Head of caudate nucleus (tissue), 42 donors: ENCODE measurements at regions of chr13 and their contacts with region 1.

Region 1: GRCh38 chr13:33542283-33543088 is 256.9 kb upstream of the STARD13 start:
- DNase-seq: peak; percentile 90 to 99 (median 97)

Region 2: DNA sequence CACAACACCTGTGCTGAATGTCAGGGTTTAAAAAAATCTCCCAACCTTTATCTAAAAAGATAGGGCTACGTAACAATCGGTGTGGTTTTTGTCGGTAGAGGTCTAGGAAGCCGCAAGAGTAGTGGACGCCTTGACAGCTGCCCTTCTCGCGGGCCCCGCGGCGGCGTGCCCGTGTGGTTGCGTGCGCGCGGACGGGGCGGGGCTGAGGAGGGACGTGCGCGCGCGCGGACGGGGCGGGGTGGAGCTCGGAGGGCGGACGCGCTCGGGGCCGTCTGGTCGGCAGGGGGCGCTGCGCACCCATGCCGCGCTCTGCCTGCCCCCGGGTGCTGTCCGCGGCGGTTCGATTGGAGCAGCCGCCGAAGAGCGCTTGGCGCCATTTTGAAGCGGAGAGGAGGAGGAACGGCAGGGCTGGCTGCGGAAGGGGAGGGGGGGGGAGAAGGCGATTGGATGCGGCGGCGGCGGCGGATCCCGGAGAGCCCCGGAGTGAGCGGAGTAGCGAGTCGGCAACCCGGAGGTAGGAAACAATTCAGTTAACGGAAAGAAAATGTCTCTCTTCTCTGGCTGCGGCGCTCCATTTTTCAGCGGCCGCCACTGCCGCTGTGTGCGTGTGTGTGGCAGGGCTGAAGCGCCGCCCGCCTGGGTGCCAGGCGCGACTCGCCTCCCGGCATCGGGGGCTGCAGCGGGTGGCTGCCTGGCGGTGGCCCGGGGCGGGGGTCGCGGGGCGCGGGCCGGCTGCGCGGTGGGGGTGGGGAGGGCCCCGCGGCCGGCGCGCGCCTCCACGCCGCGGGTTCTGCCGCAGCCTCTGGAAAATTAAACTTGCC is 956.2 kb before region 1 on chr13 and contains the start of gene PDS5B:
- intact Hi-C with region 1: loop called (anchors 5 kb)
- DNase-seq: peak; percentile 79 to 98 (median 95)

Region 3: DNA sequence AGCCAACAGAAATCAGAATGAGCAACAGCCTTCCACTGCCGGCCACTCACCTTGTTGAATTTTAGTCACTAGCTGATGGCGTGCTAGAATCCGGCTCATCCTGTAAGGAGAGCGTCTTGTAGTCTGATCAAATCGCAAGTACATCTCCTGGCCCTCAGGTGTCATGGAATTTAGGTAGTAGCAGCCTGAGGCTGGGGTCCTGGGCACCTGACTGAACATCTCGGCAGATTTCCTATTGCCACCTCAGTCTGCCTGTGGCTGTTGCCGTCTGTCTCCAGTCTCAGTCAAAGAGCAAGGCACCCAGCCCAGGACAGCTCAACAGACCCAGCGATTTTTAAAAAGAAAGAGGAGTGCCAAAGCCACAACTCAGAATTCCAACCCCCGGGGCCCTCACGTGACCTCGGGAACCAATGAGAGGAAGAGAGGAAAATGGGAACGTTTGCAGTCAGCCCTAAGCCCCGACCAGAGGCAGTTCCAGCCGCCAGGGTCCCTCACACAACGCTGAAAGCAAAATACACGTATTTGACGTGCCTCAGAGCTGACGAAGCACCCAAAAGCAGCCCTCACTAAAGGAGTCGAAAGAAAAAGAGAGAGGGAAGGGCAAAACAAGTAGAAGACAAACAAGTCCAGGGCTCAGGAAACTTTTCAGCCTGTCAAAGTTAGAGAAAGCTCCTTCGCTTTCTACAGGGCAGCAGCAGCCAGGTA is 256.9 kb before region 1 on chr13 and contains the start of gene STARD13:
- intact Hi-C with region 1: loop called (anchors 10 kb)
- DNase-seq: peak; percentile 80 to 99 (median 94)

Region 4: DNA sequence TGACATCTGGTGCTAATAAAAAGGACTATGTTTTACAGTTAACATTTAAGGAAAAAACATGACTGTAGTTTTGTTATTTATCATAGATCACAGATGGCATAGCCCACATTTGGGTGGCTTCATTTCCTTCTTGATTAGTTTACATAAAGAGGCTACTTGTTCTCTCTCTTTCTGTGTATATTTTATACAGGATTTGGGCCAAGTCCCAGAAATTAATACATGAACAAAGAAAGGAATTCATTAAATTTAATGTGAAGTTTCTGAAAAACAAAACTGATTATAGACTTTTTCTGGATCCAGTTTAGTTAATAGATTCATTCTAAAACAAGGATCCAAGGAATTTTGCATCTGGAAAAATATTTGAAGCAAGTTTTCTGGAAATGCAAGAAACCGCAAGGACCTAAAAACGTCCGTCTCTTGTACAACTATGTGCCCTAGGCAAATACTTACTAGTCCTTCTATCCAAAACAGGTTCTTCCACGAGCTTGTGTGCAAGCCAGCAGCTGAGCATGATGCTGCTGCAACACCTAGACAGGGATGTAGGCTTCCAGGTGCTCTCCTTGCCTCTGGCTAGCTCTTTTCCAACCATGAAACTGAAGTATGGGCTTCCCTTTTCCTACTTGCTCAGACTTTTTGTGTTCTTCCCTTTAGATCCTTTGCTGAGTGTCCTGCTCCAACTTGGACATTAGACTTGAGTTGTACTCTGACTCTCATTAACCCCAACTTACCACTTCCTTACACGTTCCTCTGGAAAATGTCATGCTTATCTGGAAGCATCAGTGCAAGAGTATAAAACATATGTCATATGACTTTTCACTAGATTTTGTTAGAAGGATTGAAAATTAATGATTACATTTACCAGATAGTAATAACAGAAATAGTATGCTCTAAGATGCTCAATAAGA is 95.4 kb before region 1 on chr13:
- intact Hi-C with region 1: loop called (anchors 5 kb)
- DNase-seq: no peak

Region 5: DNA sequence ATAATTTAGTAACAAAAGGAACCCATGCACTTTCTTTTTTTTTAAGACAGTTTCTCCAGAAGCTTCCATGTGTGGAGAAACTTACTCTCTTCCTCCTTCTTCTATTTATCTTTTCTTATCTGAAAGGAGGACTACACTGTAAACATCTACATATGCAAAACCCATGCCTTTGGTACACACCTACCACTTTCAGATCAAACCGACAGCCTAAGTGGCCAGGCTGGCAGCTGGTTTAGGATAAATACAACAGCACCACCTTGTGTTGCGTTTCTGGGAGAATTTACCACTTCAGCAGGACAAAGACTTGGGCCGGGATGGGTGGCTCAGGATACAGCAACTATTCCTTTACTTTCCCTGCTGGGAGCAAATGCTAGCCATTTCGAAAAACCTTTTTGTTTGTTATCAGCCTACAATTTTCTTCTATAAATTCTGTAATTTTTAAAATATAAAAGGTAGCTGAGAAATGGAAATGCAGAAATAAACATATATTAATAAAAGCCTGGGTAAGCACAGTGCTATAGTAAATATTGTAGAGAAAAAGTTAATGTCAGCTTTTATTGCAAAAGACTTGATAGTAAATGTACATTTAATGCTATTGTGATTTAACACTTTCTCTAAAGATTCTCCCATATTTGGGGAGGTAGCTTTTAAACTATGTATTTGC is 181.4 kb after region 1 on chr13:
- intact Hi-C with region 1: loop called (anchors 5 kb)
- DNase-seq: peak; percentile 44 to 95 (median 82)

Region 6: GRCh38 chr13:33817901-33818706 is 275.6 kb after region 1 on chr13 and contains the start of gene RFC3:
- intact Hi-C with region 1: loop called (anchors 5 kb)
- DNase-seq: peak; percentile 88 to 97 (median 93)

Region 7: DNA sequence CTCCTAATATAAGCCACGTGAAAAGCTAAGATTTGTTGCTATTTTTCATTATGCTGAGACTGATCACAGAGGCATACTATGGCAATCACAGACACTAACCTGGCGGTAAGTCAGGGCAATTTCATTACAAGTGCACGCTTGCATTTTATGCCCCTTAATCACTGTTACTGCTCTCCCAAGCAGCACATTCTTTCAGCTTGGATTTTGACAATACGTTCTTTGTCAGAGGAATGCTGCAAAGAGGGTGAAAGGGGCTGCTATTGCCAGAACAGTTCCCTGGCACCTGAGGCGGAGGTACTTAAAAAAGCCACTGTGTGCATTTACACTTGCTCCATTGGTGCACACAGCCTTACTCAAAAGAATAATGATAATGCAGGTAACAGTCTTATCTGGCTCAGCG is 622.1 kb after region 1 on chr13:
- intact Hi-C with region 1: no loop called
- DNase-seq: no peak